IMR-90 (cell line): ENCODE measurements at regions of chr17 and their contacts with region 1.

Region 1: DNA sequence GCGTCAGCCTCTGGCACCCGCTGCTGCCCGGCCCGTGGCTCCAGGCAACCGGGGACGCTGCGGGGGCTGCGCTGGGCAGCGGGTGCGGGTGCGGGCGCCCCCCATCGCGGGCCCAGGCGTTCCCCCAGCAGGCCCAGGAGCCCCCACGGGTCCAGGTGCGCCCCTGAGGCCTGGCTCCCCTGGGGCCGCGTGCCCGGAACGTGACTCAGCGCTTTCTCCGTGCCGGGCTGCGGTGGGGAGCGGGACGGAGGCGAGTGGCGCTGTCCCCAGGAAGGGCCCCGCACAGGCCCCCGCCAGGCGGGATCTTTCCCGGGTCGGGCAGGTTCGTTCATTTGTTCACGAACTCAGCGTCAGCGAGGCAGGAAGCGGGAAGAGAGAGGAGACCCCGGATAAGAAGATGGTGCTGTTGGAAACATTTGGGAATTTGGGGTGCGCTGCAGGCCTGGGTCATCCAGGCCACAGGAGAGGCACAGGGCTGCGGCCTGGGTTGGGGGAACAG is 18.4 kb upstream of the EXOC7 start:
- DNase-seq: no peak
- ATAC-seq: no peak; the same call in 1 of the 2 replicates
- H3K4me3 ChIP-seq: no peak overlapping the region
- H3K27ac ChIP-seq: no peak overlapping the region
- H3K4me1 ChIP-seq: peaks cover 3% of the 10 kb centered on the region; the same call in 1 of the 2 replicates
- H3K27me3 ChIP-seq: peaks cover 11% of the 10 kb centered on the region
- CTCF ChIP-seq: no peak
- POLR2A ChIP-seq: no peak
- RAD21 ChIP-seq: no peak

Region 2: GRCh38 chr17:76182016-76182764 is 60.2 kb after region 1 on chr17:
- CTCF ChIA-PET with region 1: interaction called, 3 read pairs
- POLR2A ChIA-PET with region 1: no interaction called
- dilution Hi-C with region 1: no loop called
- in situ Hi-C with region 1: no loop called
- intact Hi-C with region 1: loop called (anchors 1 kb)
- DNase-seq: peak; percentile 89
- ATAC-seq: peak; percentile 97
- H3K4me3 ChIP-seq: no peak overlapping the region
- H3K27ac ChIP-seq: no peak overlapping the region
- H3K4me1 ChIP-seq: no peaks in the 10 kb centered on the region
- H3K27me3 ChIP-seq: no peaks in the 10 kb centered on the region
- CTCF ChIP-seq: peak; percentile 79
- POLR2A ChIP-seq: no peak
- RAD21 ChIP-seq: peak; percentile 72

Region 3: DNA sequence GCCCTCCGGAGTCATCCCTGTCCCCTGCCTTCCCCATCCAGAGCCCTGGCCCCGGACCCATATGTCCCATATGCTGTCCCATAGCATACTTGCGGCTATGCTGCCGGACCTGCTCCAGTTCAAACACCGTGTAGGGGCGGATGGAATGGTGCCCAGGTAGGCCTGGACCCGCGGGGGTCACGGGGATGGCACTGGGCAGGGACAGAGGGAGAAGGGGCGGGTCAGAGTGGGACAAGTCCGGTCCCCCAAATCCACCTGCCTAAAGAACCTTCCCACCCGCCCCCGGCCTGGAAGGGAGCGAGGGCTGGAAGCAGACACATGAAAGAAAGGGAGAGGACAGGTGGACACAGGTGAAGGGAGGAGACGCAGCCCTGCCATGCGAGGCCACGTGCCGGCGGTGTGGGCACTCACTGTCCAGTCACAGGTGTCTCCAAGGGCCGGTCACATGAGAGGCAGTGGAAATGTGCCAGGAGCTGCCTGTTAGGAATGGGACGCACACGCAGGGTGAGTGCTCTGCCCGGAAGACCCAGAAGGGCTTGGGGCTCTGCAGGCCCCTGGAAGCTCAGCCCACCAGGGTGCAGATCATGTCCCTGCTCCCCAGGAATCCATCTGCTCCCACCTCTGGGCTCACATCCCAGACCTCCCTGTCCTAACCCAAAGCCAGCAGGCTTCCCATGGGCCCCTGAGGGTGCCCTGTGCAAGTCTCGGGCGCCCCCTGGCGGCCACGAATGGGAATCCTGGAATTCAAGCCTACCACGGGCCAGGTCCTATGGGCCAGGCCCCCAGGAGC is 157.2 kb after region 1 on chr17:
- CTCF ChIA-PET with region 1: interaction called, 27 read pairs
- POLR2A ChIA-PET with region 1: no interaction called
- dilution Hi-C with region 1: no loop called
- in situ Hi-C with region 1: loop called (anchors 5 kb)
- intact Hi-C with region 1: loop called (anchors 1 kb)
- DNase-seq: peak; percentile 62
- ATAC-seq: peak; percentile 98
- H3K4me3 ChIP-seq: no peak overlapping the region
- H3K27ac ChIP-seq: no peak overlapping the region
- H3K4me1 ChIP-seq: peaks cover 4% of the 10 kb centered on the region
- H3K27me3 ChIP-seq: no peaks in the 10 kb centered on the region
- CTCF ChIP-seq: peak; percentile 98
- POLR2A ChIP-seq: no peak
- RAD21 ChIP-seq: peak; percentile 99